MCF 10A (cell line): ENCODE measurements at regions of chr16 and their contacts with region 1.

Region 1: DNA sequence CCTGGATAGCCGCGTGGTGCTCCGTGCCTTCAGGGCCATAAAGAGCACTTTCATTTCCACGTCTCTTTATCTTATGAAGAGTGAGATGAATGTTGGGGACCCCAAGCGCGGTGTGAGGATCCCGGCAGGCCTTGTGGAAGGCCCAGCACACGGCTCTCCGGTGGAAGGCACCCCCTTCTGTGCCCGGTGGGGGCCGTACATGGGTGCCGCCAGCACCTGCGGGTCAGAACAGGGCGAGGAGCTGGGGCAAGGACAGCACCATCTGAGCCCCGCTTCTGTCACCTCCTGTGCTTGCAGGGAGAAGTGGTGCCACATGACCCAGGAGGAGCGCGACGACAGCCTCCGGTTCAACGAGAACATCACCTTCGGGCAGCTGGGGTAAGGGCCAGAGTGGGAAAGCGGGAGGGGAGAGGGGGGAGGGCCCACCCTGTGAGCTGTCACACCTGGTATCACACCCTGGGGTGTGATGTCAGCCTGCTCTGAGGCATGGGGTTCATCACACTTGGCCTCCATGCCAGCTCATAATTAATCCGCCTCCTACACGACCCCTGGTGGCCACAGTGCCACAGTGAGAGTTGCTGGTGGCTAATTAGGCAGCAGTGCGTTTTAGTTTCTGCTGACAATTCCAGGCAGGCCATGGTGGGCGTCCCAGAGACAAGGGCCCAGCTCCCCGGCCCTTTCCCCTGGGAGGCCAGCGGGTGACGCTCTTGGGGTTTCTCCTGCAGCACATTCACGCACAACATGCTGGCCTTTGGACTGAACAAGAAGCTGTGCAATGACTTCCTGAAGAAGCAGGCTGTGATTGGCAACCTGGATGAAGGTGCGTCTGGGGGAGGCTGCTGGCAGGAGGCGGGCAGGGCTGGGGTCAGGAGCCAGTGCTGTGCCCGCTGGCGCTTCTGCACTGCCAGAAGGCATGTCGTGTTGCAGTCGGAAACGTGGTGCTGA is 25.7 kb downstream of the CIBAR2 start:
- DNase-seq: peak; percentile 75
- H3K4me3 Mint-ChIP-seq: no peak overlapping the region
- H3K27ac Mint-ChIP-seq: no peak overlapping the region
- H3K4me1 Mint-ChIP-seq: no peaks in the 10 kb centered on the region
- H3K27me3 Mint-ChIP-seq: no peaks in the 10 kb centered on the region
- CTCF ChIP-seq: peak; percentile 67

Region 2: DNA sequence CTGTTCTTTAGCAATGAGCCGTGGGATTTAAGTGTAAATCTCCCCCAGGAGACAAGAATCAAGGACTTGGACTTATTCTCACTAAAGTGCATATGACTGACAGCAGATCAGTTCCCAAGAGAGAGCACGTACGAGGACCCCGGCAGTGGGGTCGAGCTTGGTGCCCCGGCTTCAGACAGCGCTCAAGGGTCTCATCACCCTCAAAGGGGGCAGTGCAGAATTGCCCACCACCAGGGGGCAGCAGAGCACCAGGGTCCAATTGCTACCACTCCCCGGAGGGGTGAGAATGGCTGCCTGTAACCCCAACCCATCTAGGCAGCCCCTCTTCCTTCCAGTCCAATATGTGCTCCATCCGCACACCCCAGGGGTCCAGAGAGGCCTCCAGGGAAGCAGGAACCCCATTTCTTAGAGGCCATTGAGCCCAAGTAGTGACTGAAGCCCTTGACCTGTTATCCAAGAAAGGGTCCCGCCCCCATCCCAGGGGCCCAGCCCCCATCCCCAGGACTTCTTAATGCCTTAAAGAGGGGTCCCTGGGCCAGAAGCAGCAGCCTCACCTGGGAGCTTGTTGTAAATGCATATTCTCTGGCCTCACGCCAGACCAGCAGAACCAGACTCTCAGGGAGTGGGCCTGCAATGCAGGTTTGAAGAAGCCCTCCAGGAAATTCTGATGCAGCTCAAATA is 161.4 kb before region 1 on chr16:
- CTCF ChIA-PET with region 1: interaction called, 17 read pairs
- POLR2A ChIA-PET with region 1: no interaction called
- intact Hi-C with region 1: loop called (anchors 1 kb)
- DNase-seq: peak; percentile 59
- H3K4me3 Mint-ChIP-seq: no peak overlapping the region
- H3K27ac Mint-ChIP-seq: no peak overlapping the region
- H3K4me1 Mint-ChIP-seq: peaks cover 6% of the 10 kb centered on the region
- H3K27me3 Mint-ChIP-seq: no peaks in the 10 kb centered on the region
- CTCF ChIP-seq: peak; percentile 91

Region 3: DNA sequence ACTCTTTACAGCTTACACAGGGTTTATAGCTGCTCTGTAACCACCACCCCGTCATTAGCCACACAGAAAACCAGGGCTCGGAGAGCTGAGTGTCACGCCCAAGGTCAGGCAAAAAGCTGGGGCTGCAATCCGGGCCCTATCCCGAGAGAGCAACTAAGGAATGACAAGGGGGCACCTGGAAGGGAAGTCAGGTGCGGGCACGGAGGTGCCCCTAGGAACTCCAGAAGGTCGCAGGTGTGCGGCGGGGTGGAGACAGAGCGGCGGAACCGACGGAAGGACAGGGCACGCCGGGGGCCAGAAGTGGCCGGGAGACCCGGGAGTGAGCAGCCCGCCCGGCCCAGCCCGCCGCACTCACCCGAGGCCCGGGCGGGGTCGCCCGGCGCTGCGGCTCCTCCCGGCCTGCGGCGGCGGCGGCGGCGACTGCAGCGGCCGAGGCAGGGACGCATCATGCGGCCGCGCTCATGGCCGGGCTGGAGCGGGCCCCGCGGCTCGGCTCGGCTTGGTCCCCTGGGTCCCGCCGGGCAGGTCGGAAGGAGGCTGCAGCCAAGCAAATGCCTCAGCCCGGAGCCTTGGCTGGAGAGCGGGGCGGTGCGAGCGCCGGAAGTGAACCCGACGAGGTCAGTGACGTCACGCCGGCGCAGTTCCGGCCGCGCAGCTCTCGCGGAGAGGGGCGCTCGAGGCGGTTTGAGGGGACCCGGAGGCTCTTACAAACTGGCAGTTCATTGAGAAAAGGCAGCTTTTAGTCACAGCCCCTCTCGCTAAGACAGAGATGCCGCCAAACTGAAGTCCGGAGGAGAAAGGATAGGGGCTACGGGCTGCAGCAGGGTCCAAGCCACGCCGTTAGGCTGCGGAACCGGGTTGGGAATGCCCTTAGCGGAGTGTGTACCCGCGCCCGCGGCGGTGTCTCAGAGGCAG is 75.4 kb before region 1 on chr16 and contains the start of gene ZDHHC7:
- CTCF ChIA-PET with region 1: interaction called, 10 read pairs
- POLR2A ChIA-PET with region 1: interaction called, 7 read pairs
- intact Hi-C with region 1: loop called (anchors 1 kb)
- DNase-seq: peak; percentile 75
- H3K4me3 Mint-ChIP-seq: peak within 1 kb of the TSS; percentile 84
- H3K27ac Mint-ChIP-seq: peak within 1 kb of the TSS; percentile 99
- H3K4me1 Mint-ChIP-seq: peaks cover 15% of the 10 kb centered on the region
- H3K27me3 Mint-ChIP-seq: no peaks in the 10 kb centered on the region
- CTCF ChIP-seq: no peak
- total RNA-seq, gene ZDHHC7: 46.3 and 54.5 TPM in 2 replicates